ENCODE measurements at regions of chr4 and their contacts with region 1.

Region 1: DNA sequence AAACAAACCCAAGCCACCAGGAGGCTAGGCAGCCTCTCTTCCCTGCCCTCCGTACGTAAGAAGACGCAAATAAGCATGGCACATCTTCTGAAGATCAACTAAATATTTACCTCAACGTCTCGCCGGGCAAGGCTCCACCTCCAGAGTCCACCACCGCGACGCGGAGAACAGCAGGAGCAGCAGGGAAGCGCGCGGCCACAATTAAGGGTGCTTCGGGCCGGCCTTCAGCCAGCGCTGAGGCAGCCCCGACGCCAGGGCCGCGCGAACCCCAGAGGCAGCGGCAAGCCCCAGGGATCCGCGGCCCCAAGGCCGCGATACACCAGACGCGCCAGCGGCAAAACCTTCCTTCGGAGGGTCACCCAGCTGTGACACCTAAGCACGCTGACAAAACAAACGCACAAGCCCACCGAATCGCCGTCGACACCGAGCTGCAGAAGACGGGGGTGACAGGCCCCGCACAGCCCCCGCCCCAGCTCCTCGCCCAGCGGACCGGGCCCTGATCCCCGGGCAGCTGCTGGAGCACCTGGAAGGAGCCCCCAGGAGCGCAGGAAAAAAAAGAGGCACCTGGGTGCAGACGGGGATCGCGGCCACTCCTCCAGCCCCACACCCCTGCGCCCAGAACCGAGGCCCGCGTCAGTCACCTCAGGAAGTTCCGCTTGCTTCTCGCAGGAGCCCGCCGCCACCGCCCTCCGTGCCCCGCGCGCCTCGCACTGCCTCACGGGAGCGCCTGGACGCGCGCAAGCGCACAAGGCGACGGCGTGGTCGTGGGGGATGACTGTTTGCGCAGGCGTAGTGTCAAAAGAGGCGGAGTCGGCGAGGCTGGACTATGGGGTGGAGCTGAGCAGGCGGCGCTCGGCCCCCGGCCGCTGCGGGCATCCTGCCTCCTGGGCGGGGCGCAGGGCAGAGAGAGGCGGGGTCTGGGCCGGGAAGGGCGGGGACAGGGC is at the starts of genes HAUS3 and POLN:
- DNase-seq: peak; percentile 96 to 100 (median 98)

Region 2: GRCh38 chr4:2262143-2262943 is 20.7 kb after region 1 on chr4:
- intact Hi-C with region 1: loop called (anchors 2 kb)
- DNase-seq: peak; percentile 97 to 100 (median 100)

Region 3: GRCh38 chr4:2408401-2408958 is 166.8 kb after region 1 on chr4:
- intact Hi-C with region 1: no loop called
- DNase-seq: peak in 3 of 10 donors; percentile 58 to 75 (median 59)

Region 4: GRCh38 chr4:2468445-2469192 is 226.9 kb after region 1 on chr4 and contains the start of gene RNF4:
- intact Hi-C with region 1: loop called (anchors 5 kb)
- DNase-seq: peak; percentile 91 to 99 (median 94)

Region 5: GRCh38 chr4:3220476-3221183 is 978.9 kb after region 1 on chr4:
- intact Hi-C with region 1: no loop called
- DNase-seq: peak in 3 of 10 donors; percentile 47 to 79 (median 72)